ENCODE measurements at regions of chr17 and their contacts with region 1.

Region 1: GRCh38 chr17:40443583-40444327 is 505 bp downstream of the IGFBP4 start:
- DNase-seq: peak; percentile 79 to 92
- H3K4me3 ChIP-seq: peak overlapping the region; percentile 59 to 67
- H3K27ac ChIP-seq: peak overlapping the region; percentile 94
- H3K4me1 ChIP-seq: peaks cover 0 to 61% (median 48%) of the 10 kb centered on the region in 4 donors
- H3K27me3 ChIP-seq: no peaks in the 10 kb centered on the region
- CTCF ChIP-seq: peak; percentile 35 to 50

Region 2: DNA sequence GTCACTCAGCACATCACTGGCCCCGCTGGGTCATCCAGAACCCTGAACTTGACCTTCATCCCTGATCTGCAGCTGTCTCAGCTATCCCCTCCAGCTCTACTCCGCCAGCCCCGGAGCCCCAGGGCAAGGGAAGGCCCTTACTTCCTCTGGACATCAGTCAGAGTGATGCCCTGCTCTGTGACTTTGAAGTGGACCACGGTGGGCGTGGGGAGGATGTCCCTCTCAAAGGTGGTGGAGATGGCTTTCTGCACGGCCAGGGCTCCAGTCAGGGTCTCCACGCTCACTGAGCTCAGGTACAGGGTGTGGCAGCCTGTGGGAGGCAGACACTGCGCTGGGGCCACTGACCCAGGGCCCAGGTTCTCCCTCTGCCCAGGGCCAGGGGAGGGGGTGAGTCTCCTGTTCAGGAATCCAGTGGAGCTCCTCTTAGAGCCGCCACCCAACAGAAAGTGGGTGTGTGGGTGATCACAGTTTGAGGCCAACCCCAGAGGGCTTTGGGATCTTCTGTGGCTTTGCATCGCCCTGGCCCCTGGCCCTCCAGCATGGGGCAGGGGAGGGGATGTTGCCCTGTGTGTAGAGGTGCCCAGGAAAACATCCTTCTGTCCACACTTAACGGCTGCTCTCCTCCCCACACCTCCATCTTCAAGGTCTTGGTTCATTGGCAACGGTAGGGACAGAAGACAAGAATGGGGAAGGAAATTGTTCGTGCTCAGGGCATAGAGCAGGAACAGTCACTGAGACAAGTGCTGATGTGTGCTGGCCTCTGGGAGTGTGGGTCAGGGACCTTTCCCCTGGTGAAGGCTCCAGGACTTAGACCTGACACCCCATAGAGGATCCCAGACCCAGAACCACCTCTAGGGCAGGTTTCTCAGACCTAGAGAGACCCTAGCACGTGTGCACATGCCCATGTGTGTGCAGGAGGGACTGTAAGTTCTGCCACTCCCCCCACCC is 36.1 kb after region 1 on chr17:
- intact Hi-C with region 1: loop called (anchors 2 kb)
- DNase-seq: no peak
- H3K4me3 ChIP-seq: no peak overlapping the region
- H3K27ac ChIP-seq: no peak overlapping the region
- H3K4me1 ChIP-seq: peaks cover 0 to 9% (median 5%) of the 10 kb centered on the region in 4 donors
- H3K27me3 ChIP-seq: no peaks in the 10 kb centered on the region
- CTCF ChIP-seq: no peak

Region 3: GRCh38 chr17:40659911-40660310 is 216.2 kb after region 1 on chr17:
- intact Hi-C with region 1: no loop called
- DNase-seq: no peak
- H3K4me3 ChIP-seq: no peak overlapping the region
- H3K27ac ChIP-seq: no peak overlapping the region
- H3K4me1 ChIP-seq: no peaks in the 10 kb centered on the region
- H3K27me3 ChIP-seq: peaks cover 0 to 9% of the 10 kb centered on the region in 2 donors
- CTCF ChIP-seq: no peak

Measured in tibial artery (tissue), 4 donors.